Endothelial cell of umbilical vein (primary cell): ENCODE measurements at regions of chr13 and their contacts with region 1.

Region 1: GRCh38 chr13:44577236-44578066 is 1.3 kb upstream of the TSC22D1 start:
- DNase-seq: peak; percentile 96
- H3K4me3 ChIP-seq: peak overlapping the region; percentile 64 to 80 (median 72)
- H3K27ac ChIP-seq: peak overlapping the region; percentile 91
- H3K4me1 ChIP-seq: peaks cover 37% of the 10 kb centered on the region
- H3K27me3 ChIP-seq: no peaks in the 10 kb centered on the region
- CTCF ChIP-seq: no peak
- POLR2A ChIP-seq: peak; percentile 88

Region 2: GRCh38 chr13:44237276-44237767 is 340.1 kb before region 1 on chr13:
- CTCF ChIA-PET with region 1: no interaction called
- POLR2A ChIA-PET with region 1: no interaction called
- dilution Hi-C with region 1: no loop called
- intact Hi-C with region 1: loop called (anchors 5 kb)
- DNase-seq: peak; percentile 97
- H3K4me3 ChIP-seq: no peak overlapping the region
- H3K27ac ChIP-seq: peak overlapping the region; percentile 84
- H3K4me1 ChIP-seq: peaks cover 21% of the 10 kb centered on the region
- H3K27me3 ChIP-seq: no peaks in the 10 kb centered on the region
- CTCF ChIP-seq: no peak
- POLR2A ChIP-seq: no peak

Region 3: GRCh38 chr13:44484562-44485138 is 92.8 kb before region 1 on chr13:
- CTCF ChIA-PET with region 1: interaction called, 10 read pairs
- POLR2A ChIA-PET with region 1: no interaction called
- dilution Hi-C with region 1: no loop called
- intact Hi-C with region 1: loop called (anchors 2 kb)
- DNase-seq: peak; percentile 9
- H3K4me3 ChIP-seq: no peak overlapping the region
- H3K27ac ChIP-seq: no peak overlapping the region
- H3K4me1 ChIP-seq: peaks cover 10% of the 10 kb centered on the region
- H3K27me3 ChIP-seq: no peaks in the 10 kb centered on the region
- CTCF ChIP-seq: no peak
- POLR2A ChIP-seq: no peak

Region 4: DNA sequence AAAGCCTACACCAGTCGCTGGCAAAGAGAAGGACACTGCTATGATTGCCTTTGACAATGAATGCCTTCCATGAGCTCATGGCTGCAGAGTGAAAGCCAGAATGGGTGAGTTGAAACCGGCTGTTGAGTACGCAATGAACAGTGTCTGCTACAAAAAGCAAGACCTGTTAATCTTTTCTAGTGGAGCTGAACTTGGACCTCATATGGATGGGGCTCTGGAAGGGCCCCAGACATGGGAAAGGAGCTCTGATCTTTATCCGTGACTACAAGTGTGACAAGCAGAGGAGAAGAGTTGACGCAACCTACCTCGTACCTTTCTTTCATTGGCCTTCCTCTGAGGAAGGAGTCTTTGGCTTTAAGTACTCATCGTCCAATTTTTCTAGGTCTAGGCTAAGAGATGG is 65.8 kb after region 1 on chr13:
- CTCF ChIA-PET with region 1: no interaction called
- POLR2A ChIA-PET with region 1: no interaction called
- dilution Hi-C with region 1: no loop called
- intact Hi-C with region 1: no loop called
- DNase-seq: no peak
- H3K4me3 ChIP-seq: no peak overlapping the region
- H3K27ac ChIP-seq: no peak overlapping the region
- H3K4me1 ChIP-seq: no peaks in the 10 kb centered on the region
- H3K27me3 ChIP-seq: no peaks in the 10 kb centered on the region
- CTCF ChIP-seq: no peak
- POLR2A ChIP-seq: no peak

Region 5: GRCh38 chr13:44758630-44759383 is 181.4 kb after region 1 on chr13:
- CTCF ChIA-PET with region 1: no interaction called
- POLR2A ChIA-PET with region 1: no interaction called
- dilution Hi-C with region 1: no loop called
- intact Hi-C with region 1: loop called (anchors 2 kb)
- DNase-seq: peak; percentile 85
- H3K4me3 ChIP-seq: no peak overlapping the region
- H3K27ac ChIP-seq: peak overlapping the region; percentile 85
- H3K4me1 ChIP-seq: peaks cover 53% of the 10 kb centered on the region
- H3K27me3 ChIP-seq: no peaks in the 10 kb centered on the region
- CTCF ChIP-seq: no peak
- POLR2A ChIP-seq: no peak

Region 6: DNA sequence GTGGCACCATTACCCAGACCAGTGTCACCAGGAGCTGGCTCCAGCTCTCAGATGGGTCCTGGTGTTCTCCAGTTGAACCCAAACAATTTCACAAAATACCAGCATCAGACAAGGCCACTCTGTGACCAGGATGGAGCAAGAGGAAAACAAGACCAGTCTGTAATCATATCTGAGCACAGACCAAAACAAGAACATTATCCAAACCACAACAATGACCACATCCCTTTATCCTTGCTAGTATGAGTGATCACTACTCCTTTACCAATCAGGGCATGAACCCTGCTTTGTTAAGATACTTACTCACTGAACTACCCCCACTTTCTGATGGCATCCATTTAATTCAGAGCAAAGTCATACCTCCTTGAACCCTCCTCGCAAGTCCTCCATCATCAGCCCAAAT is 266.0 kb after region 1 on chr13:
- CTCF ChIA-PET with region 1: no interaction called
- POLR2A ChIA-PET with region 1: no interaction called
- dilution Hi-C with region 1: no loop called
- intact Hi-C with region 1: loop called (anchors 2 kb)
- DNase-seq: no peak
- H3K4me3 ChIP-seq: no peak overlapping the region
- H3K27ac ChIP-seq: no peak overlapping the region
- H3K4me1 ChIP-seq: peaks cover 38% of the 10 kb centered on the region
- H3K27me3 ChIP-seq: no peaks in the 10 kb centered on the region
- CTCF ChIP-seq: no peak
- POLR2A ChIP-seq: no peak

Region 7: GRCh38 chr13:44917589-44918325 is 340.3 kb after region 1 on chr13:
- CTCF ChIA-PET with region 1: interaction called, 5 read pairs
- POLR2A ChIA-PET with region 1: no interaction called
- dilution Hi-C with region 1: no loop called
- intact Hi-C with region 1: loop called (anchors 1 kb)
- DNase-seq: peak; percentile 98
- H3K4me3 ChIP-seq: peak overlapping the region; percentile 4 to 66 (median 38)
- H3K27ac ChIP-seq: peak overlapping the region; percentile 95
- H3K4me1 ChIP-seq: peaks cover 29% of the 10 kb centered on the region
- H3K27me3 ChIP-seq: no peaks in the 10 kb centered on the region
- CTCF ChIP-seq: peak; percentile 38 to 42
- POLR2A ChIP-seq: no peak

Region 8: DNA sequence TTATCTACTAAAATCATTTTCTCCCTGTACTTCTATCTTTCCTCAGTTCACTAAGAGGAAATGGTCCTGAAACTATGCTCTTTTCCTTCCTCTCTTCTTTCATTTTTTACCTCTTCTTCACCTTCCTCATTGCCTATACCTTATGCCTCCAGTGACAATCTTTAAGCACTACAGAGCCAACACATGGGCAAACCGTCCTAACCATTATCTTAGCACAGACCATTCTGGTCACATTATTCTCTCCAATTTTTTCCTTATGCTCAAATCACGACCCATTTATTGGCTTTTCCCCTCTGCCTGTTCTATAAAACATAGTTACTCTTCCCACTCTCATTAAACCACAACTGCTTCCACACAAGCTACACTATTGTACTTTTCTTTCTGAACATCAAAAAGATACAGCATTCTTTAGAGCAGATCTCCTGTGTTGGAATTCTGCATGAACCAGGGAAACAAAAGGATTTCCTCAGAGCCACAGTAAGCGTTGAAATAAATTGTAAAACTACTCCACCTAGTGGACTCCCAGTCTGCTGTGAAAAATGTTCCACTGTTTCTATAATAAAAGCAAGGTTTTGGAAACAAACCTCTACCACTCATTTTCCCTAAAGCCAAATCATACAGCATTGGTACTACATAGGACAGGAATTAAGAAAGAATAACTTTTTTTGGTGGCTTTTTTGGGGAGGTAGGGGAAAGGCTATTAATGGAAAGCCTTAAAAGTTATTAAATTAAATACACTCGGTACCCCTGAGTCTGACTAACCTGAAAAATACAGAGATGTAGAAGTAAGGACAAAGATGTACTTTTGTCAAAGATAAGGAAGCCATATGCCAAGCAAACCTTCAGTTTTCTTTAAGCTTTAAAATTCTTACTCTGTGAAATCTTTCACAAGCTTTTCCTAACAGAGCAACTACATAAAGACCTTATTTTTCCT is 392.4 kb after region 1 on chr13:
- CTCF ChIA-PET with region 1: no interaction called
- POLR2A ChIA-PET with region 1: no interaction called
- dilution Hi-C with region 1: no loop called
- intact Hi-C with region 1: loop called (anchors 2 kb)
- DNase-seq: peak; percentile 66
- H3K4me3 ChIP-seq: no peak overlapping the region
- H3K27ac ChIP-seq: peak overlapping the region; percentile 1
- H3K4me1 ChIP-seq: peaks cover 44% of the 10 kb centered on the region
- H3K27me3 ChIP-seq: no peaks in the 10 kb centered on the region
- CTCF ChIP-seq: peak; percentile 40 to 56
- POLR2A ChIP-seq: no peak